ENCODE measurements at regions of chr1 and their contacts with region 1.

Region 1: GRCh38 chr1:32316903-32317277 is 19.1 kb downstream of the MARCKSL1 start:
- DNase-seq: no peak
- ATAC-seq: no peak
- H3K4me3 ChIP-seq: no peak overlapping the region
- H3K27ac ChIP-seq: no peak overlapping the region
- H3K4me1 ChIP-seq: no peaks in the 10 kb centered on the region
- H3K27me3 ChIP-seq: no peaks in the 10 kb centered on the region
- CTCF ChIP-seq: no peak
- POLR2A ChIP-seq: no peak

Region 2: DNA sequence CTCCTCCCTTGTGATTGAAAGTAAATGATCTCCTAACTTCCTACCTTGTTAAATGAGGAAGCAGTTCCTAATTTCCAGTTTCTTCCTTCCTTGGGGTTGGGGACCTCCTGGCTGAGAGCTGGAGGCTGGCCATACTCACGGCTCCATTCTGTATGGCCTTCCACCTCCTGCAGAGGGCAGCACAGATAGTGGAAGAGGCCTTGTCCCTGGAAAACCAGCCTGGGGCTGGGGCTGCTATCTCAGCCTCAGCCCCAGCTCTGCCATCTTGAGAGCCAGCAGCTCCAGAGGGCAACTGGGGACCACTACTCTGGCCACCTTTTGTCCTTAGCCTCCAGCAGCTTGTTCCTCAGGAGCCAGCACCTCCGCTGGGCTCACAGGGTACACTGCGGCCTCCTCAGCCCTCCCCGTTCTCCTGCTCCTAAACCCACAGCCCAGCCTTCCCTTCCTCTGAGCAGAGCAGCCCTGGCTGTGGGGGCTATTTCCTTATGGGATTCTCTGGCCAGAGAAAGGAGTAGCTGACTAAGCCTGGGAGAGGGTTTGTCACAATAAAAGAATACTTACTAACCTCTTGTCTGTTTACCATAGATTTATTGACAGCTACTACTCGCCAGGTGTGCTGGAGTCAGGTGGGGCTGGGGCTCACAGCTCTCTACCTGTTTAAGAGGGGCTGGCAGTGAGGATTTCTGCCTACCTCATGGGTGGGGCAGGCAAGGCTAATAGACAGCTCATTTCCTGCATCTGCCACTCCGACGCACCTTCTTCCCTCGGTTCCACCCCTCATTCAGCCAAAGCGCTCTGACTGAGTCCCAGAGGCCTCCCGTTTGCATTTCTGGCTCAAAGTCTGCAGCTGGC is 101.0 kb before region 1 on chr1:
- in situ Hi-C with region 1: no loop called
- intact Hi-C with region 1: loop called (anchors 2 kb)
- DNase-seq: peak in 1 of 2 donors; percentile 35
- ATAC-seq: peak; percentile 77 to 84
- H3K4me3 ChIP-seq: no peak overlapping the region
- H3K27ac ChIP-seq: peak overlapping the region in 1 of 4 donors; percentile 11
- H3K4me1 ChIP-seq: peaks cover 0 to 3% of the 10 kb centered on the region in 2 donors
- H3K27me3 ChIP-seq: no peaks in the 10 kb centered on the region
- CTCF ChIP-seq: peak; percentile 50 to 73 (median 67)
- POLR2A ChIP-seq: no peak

Measured in gastrocnemius medialis (tissue), 4 donors.